ENCODE measurements at regions of chr1 and their contacts with region 1.

Region 1: DNA sequence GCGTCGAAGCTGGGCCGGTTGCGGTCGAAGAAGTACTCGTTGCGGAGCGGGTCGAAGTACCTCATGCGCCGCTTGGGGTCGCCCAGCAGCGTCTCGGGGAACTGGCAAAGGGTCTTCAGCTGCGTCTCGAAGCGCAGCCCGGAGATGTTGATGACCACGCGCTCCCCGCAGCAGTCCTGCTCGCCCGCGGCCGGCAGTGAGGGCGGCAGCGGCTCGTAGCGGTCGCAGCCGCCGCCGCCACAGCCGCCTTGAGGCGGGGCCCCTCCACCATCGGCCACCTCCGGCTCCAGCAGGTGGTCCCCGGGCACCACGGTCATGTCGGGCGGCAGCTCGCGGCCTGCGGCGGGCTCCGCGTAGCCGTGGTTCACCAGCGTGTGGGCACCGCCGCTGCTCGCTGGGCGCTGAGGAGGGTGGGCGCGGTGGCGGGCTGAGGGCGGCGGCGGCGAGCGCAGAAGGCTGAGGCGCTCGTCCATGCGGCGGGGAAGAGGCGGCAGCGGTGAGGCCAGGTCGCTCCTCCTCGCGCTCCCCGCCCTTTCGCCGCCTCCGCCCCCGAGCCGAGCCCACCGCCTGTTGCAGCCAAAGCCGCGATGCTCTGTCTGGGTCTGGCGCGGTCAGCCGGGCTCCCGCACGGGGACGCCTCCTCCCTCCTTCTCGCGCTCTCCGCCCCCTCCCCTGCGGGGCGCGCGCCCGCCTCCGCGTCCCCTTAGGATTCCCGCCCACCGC is at the start of gene KCNA3:
- DNase-seq: peak; percentile 92
- H3K4me3 Mint-ChIP-seq: peak within 1 kb of the TSS; percentile 95
- H3K27ac Mint-ChIP-seq: peak within 1 kb of the TSS; percentile 94
- H3K4me1 Mint-ChIP-seq: peaks cover 50% of the 10 kb centered on the region
- H3K27me3 Mint-ChIP-seq: no peaks in the 10 kb centered on the region
- total RNA-seq, gene KCNA3: 26.9 and 29.5 TPM in 2 replicates

Region 2: DNA sequence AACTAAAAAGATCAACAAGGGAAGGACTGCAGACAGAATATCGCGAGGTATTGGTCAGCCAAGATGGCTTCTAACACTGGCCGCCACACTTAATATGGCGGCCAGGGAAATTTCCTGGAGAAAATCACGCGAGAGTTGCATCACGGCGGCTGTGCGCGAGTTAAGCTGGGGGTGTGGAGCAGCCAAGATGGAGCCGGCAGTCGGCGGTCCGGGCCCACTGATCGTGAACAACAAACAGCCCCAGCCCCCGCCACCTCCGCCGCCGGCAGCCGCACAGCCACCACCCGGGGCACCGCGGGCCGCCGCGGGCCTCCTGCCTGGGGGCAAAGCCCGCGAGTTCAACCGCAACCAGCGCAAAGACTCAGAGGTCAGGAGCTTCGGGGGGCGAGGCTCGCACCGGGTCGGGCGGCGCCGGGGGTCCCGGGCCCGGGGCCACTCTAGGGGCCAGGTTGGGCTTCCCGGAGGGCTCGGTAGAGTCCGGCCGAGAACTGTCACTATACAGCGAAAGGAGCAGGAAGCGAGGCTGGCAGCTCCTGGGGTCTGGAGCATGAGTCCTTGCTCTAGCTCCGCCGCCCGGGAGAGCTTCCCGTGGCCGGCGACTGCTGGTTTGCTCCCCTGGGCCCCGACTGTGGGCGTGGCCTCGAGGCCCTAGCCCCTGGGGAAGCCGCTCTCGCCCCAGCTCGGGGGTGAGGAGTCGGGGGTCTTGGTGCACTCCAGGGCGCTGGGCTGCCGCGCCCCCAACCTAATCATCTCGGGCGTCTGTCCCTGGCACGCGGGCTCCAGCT is 639.9 kb before region 1 on chr1 and contains the start of gene STRIP1:
- intact Hi-C with region 1: loop called (anchors 5 kb)
- DNase-seq: peak; percentile 98
- H3K4me3 Mint-ChIP-seq: peak within 1 kb of the TSS; percentile 97
- H3K27ac Mint-ChIP-seq: peak within 1 kb of the TSS; percentile 86
- H3K4me1 Mint-ChIP-seq: peaks cover 46% of the 10 kb centered on the region
- H3K27me3 Mint-ChIP-seq: no peaks in the 10 kb centered on the region
- total RNA-seq, gene STRIP1: 41.0 and 43.8 TPM in 2 replicates

Region 3: GRCh38 chr1:110630839-110631663 is 43.4 kb before region 1 on chr1:
- intact Hi-C with region 1: loop called (anchors 1 kb)
- DNase-seq: peak; percentile 96
- H3K4me3 Mint-ChIP-seq: no peak overlapping the region
- H3K27ac Mint-ChIP-seq: no peak overlapping the region
- H3K4me1 Mint-ChIP-seq: peaks cover 58% of the 10 kb centered on the region
- H3K27me3 Mint-ChIP-seq: no peaks in the 10 kb centered on the region

Region 4: GRCh38 chr1:110746579-110747160 is 72.2 kb after region 1 on chr1:
- intact Hi-C with region 1: loop called (anchors 5 kb)
- DNase-seq: peak; percentile 89
- H3K4me3 Mint-ChIP-seq: no peak overlapping the region
- H3K27ac Mint-ChIP-seq: no peak overlapping the region
- H3K4me1 Mint-ChIP-seq: no peaks in the 10 kb centered on the region
- H3K27me3 Mint-ChIP-seq: peaks cover 44% of the 10 kb centered on the region

Region 5: GRCh38 chr1:110798691-110799256 is 124.3 kb after region 1 on chr1:
- intact Hi-C with region 1: no loop called
- DNase-seq: no peak
- H3K4me3 Mint-ChIP-seq: no peak overlapping the region
- H3K27ac Mint-ChIP-seq: no peak overlapping the region
- H3K4me1 Mint-ChIP-seq: no peaks in the 10 kb centered on the region
- H3K27me3 Mint-ChIP-seq: peaks cover 39% of the 10 kb centered on the region

Region 6: GRCh38 chr1:110963691-110964399 is 289.3 kb after region 1 on chr1 and contains the start of gene LRIF1:
- intact Hi-C with region 1: loop called (anchors 1 kb)
- DNase-seq: peak; percentile 100
- H3K4me3 Mint-ChIP-seq: peak within 1 kb of the TSS; percentile 89
- H3K27ac Mint-ChIP-seq: peak within 1 kb of the TSS; percentile 97
- H3K4me1 Mint-ChIP-seq: peaks cover 28% of the 10 kb centered on the region
- H3K27me3 Mint-ChIP-seq: peaks cover 10% of the 10 kb centered on the region
- total RNA-seq, gene LRIF1: 14.0 and 14.4 TPM in 2 replicates

Region 7: GRCh38 chr1:111603979-111604378 is 929.5 kb after region 1 on chr1:
- intact Hi-C with region 1: loop called (anchors 5 kb)
- DNase-seq: peak; percentile 94
- H3K4me3 Mint-ChIP-seq: peak overlapping the region; percentile 87
- H3K27ac Mint-ChIP-seq: peak overlapping the region; percentile 98
- H3K4me1 Mint-ChIP-seq: peaks cover 66% of the 10 kb centered on the region
- H3K27me3 Mint-ChIP-seq: no peaks in the 10 kb centered on the region

Measured in activated CD4-positive, alpha-beta T cell treated with anti-CD3 and anti-CD28 coated beads, Interleukin-2, amount 10 ng/mL, durations not matched to agents 24 days and 14 days (primary cell).